MCF 10A (cell line): ENCODE measurements at regions of chr14 and their contacts with region 1.

Region 1: DNA sequence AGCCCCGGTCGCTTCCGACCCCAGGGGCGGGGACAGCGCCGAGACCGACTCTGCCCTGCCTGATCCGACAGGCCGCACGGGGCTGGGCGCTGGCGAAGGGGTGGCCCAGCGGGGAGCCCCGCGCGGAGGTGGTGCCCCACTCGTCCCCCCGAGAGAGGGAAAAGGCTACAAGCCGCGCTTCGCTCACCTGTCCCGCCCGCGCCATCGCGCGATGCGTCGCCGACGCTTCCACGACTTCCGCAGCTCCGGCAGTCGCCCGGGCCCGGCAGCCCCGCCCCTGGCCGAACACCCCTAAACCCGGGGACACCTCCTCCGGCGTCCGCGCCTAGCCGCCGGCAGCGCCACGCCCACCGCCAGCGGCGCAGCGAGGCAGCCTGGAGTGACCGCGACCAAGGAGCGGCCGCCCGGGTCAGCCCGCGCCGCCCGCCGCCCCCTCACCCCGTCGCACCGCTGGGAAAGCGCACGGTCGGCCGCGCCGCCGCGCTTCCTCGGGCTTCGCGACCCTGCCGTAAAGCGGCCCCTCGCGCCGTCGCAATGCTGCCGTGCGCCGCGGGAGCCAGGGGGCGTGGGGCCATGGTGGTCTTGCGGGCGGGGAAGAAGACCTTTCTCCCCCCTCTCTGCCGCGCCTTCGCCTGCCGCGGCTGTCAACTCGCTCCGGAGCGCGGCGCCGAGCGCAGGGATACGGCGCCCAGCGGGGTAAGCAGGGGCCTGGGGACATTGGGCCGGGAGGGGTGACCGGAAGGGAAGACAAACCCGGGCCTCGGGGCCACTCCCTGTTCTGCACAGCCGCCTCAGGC is at the starts of genes BAG5 and COA8:
- DNase-seq: peak; percentile 74
- H3K4me3 Mint-ChIP-seq: peak within 1 kb of the TSS; percentile 93
- H3K27ac Mint-ChIP-seq: peak within 1 kb of the TSS; percentile 85
- H3K4me1 Mint-ChIP-seq: peaks cover 19% of the 10 kb centered on the region
- H3K27me3 Mint-ChIP-seq: no peaks in the 10 kb centered on the region
- CTCF ChIP-seq: no peak
- total RNA-seq, gene BAG5: 30.9 and 35.3 TPM in 2 replicates
- total RNA-seq, gene COA8: 68.9 and 70.8 TPM in 2 replicates

Region 2: DNA sequence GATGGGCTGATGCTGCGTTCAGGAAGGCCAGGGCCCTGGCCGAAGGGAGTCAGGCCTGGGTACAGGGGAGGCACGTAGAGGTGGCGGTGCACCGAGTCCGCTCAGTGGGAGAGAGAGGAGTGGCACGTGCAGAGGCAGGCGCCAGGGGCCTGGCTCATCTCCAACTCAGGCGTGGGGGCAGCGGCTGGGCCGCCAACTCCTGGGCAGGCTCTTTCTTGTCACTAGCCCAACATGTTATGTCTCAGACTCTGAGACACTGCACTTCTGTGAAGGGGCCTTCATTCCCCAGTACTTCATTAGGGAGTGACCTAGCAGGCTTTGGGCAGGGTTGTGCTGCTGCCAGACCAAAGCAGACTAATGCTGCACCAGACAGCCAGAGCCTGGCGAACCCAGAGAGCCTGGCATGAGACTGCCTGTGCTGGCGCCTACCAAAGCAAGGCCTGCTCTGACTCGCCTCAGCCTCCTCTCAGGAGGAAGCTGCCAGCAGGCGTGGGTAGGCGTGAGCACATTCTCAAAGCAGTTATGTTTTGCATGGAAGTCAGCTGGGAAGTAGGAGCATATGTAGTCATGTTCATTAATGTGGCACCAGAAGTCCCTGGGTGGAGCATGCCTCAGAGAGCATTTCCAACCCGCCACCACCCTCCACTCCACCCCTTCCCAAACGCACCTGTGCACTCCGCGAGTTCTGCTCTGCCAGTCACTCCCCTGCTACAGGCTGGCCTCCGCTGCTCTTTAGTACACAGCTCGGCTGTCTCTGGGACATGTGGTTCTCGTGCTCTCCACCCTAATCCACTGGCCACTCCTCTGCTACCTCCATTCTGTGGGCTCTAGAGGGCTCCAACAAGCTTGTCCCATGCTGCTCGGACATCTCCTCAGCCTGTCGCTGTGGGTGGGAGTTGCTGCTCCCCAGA is 49.7 kb before region 1 on chr14:
- CTCF ChIA-PET with region 1: interaction called, 10 read pairs
- POLR2A ChIA-PET with region 1: interaction called, 24 read pairs
- intact Hi-C with region 1: no loop called
- DNase-seq: peak; percentile 89
- H3K4me3 Mint-ChIP-seq: peak overlapping the region; percentile 55
- H3K27ac Mint-ChIP-seq: peak overlapping the region; percentile 84
- H3K4me1 Mint-ChIP-seq: peaks cover 19% of the 10 kb centered on the region
- H3K27me3 Mint-ChIP-seq: no peaks in the 10 kb centered on the region
- CTCF ChIP-seq: no peak

Region 3: GRCh38 chr14:103528587-103529382 is 33.8 kb before region 1 on chr14 and contains the start of gene TRMT61A:
- CTCF ChIA-PET with region 1: interaction called, 4 read pairs
- POLR2A ChIA-PET with region 1: interaction called, 26 read pairs
- intact Hi-C with region 1: no loop called
- DNase-seq: peak; percentile 90
- H3K4me3 Mint-ChIP-seq: peak within 1 kb of the TSS; percentile 90
- H3K27ac Mint-ChIP-seq: peak within 1 kb of the TSS; percentile 96
- H3K4me1 Mint-ChIP-seq: peaks cover 8% of the 10 kb centered on the region
- H3K27me3 Mint-ChIP-seq: no peaks in the 10 kb centered on the region
- CTCF ChIP-seq: no peak
- total RNA-seq, gene TRMT61A: 10.2 and 15.8 TPM in 2 replicates

Region 4: DNA sequence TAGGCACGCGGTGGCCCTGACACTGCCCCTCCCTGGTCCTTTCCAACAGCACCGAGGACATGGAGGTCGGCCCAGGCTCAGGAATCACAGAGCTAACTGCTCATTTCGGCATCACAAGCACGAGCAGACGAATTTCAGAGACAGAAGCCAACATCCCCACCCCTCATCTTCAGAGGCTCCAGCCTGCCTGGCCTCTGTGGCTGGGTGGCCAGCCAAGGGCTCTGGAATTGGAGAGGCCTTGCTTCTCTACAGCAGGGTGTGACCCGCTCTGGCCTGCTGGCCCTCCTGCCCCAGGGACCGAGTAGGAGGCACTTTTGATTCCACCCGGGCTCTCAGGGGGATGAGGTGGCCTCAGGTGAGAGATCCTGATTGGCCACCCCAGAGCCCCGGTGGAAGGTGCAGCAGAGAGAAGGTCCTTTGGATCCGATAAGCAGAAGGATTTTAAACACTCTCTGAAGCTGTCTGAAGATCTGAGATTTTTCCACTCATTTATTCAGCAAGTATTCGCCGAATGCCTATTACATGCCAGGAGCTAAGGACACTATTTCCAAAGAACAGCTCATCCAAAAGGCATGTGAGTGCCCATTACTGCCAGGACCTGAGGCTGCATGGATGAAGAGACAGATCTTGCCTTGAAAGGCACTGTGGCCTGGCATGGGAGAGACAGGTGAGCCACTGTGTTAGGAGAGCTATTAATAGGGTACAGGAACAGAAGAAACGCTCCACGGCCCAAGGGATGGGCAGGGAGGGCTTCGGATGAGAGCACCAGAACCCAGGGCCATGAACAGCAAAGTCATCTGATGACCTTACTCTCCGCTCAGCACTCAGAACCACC is 10.4 kb before region 1 on chr14:
- CTCF ChIA-PET with region 1: interaction called, 7 read pairs
- POLR2A ChIA-PET with region 1: interaction called, 65 read pairs
- intact Hi-C with region 1: no loop called
- DNase-seq: peak; percentile 75
- H3K4me3 Mint-ChIP-seq: peak overlapping the region; percentile 54
- H3K27ac Mint-ChIP-seq: peak overlapping the region; percentile 40
- H3K4me1 Mint-ChIP-seq: peaks cover 23% of the 10 kb centered on the region
- H3K27me3 Mint-ChIP-seq: no peaks in the 10 kb centered on the region
- CTCF ChIP-seq: no peak

Region 5: GRCh38 chr14:103628684-103629502 is 66.3 kb after region 1 on chr14 and contains the start of gene KLC1:
- CTCF ChIA-PET with region 1: interaction called, 4 read pairs
- POLR2A ChIA-PET with region 1: interaction called, 63 read pairs
- intact Hi-C with region 1: no loop called
- DNase-seq: peak; percentile 72
- H3K4me3 Mint-ChIP-seq: peak within 1 kb of the TSS; percentile 83
- H3K27ac Mint-ChIP-seq: peak within 1 kb of the TSS; percentile 89
- H3K4me1 Mint-ChIP-seq: peaks cover 13% of the 10 kb centered on the region
- H3K27me3 Mint-ChIP-seq: no peaks in the 10 kb centered on the region
- CTCF ChIP-seq: no peak
- total RNA-seq, gene KLC1: 216 and 220 TPM in 2 replicates

Region 6: DNA sequence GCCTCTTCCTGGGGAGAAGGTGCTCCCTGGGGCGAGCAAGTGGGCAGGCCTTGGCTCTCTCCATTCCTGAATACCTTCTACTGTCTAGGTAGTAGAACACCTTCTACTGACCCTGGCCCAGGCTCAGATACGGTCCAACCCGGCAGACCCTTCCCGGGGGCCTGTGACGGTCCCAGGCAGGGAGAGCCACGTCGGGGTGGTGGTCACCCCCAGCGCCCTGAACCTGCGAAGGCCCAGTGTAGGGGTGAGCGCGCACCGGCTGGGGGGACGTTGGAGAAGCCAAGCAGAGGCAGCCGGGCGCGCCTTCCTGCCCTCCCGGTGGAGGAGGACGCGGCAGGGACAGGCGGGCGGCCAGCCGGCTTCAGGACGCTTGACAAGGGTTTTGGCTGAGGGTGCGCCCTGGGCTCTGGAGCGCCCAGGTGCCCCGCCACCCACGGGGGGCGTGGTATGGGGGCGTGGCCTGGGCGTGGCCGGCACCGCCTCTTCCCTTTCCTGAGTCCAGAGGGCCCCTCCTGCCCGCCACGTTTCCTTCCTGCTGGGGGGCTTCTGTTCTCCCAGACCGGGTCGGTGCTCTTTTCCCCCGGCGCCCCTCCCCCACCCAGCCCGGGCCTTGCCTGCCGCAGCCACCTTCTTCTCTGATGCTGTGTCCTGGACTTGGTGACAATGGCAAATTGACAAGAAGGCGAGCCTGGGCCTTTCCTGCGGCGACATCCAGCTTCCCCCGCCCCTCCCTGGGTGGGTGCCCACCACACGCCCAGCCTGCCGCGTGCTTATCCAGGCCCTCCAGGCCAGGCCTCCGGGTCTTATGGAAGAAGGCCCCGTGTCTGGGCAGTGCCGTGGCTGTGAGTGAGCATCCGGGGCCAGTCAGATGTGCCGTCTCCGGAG is 309.2 kb after region 1 on chr14:
- CTCF ChIA-PET with region 1: no interaction called
- POLR2A ChIA-PET with region 1: no interaction called
- intact Hi-C with region 1: no loop called
- DNase-seq: no peak
- H3K4me3 Mint-ChIP-seq: no peak overlapping the region
- H3K27ac Mint-ChIP-seq: no peak overlapping the region
- H3K4me1 Mint-ChIP-seq: peaks cover 21% of the 10 kb centered on the region
- H3K27me3 Mint-ChIP-seq: no peaks in the 10 kb centered on the region
- CTCF ChIP-seq: no peak